Activated naive CD4-positive, alpha-beta T cell treated with anti-CD3 and anti-CD28 coated beads, Interleukin-2, amount 10 ng/mL, durations not matched to agents 7 days and 5 days (primary cell): ENCODE measurements at regions of chr2 and their contacts with region 1.

Region 1: GRCh38 chr2:28452534-28453081 is 43.3 kb upstream of the PLB1 start:
- DNase-seq: peak; percentile 86
- H3K4me3 Mint-ChIP-seq: no peak overlapping the region
- H3K27ac Mint-ChIP-seq: no peak overlapping the region
- H3K4me1 Mint-ChIP-seq: peaks cover 42% of the 10 kb centered on the region
- H3K27me3 Mint-ChIP-seq: peaks cover 3% of the 10 kb centered on the region

Region 2: GRCh38 chr2:28413142-28413898 is 39.3 kb before region 1 on chr2:
- CTCF ChIA-PET with region 1: interaction called, 12 read pairs
- DNase-seq: no peak
- H3K4me3 Mint-ChIP-seq: no peak overlapping the region
- H3K27ac Mint-ChIP-seq: peak overlapping the region; percentile 74
- H3K4me1 Mint-ChIP-seq: peaks cover 53% of the 10 kb centered on the region
- H3K27me3 Mint-ChIP-seq: no peaks in the 10 kb centered on the region